Naive thymus-derived CD4-positive, alpha-beta T cell (primary cell): ENCODE measurements at regions of chr15 and their contacts with region 1.

Region 1: DNA sequence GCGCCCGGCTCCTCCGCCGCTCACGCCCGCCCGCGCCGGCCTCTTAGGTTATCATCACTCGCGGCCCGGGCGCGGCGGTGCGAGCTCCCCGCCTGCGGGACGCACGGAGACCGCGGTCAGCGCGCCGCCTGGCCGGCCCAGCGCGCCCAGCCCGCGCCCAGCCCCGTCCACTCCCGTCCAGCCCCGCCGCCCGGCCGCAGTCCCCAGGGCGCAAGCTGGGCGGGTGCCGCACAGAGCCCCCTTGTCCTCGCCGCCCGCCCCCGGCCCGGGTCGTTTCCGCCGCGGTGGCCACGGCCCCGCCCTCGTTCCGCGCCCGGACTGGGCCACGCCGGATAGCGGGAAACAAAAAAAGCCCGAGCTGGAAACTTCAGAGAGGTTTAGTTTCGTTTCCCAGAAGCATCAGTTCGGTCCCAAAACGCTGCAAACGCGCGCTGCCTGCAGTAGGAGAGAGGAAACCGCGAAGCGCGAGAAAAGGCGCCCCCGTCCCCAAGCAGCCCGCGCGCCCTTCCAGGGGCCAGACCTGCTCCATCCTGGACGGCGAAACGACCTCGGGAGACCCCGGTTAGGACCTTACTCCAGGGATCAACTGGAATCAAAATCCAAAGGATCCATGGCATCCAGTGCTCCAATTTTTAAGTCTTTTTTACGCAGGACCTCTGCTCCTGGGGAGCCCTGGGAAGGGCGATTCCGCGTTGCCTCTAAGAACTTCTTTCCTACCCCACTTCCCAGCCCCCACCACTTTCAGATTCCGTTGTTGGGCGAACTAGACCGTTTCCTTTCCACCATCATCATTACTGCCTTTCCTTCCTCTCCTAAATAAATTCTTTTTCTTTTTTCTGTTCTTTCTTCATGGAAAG is at the start of gene ATP10A:
- DNase-seq: peak in 8 of 9 donors; percentile 26 to 80 (median 44)
- ATAC-seq: no peak
- H3K4me3 ChIP-seq: peak within 1 kb of the TSS; percentile 88
- H3K4me3 Mint-ChIP-seq: peak within 1 kb of the TSS; percentile 88 to 98 (median 96)
- H3K27ac ChIP-seq: peak within 1 kb of the TSS; percentile 86
- H3K27ac Mint-ChIP-seq: peak within 1 kb of the TSS; percentile 89 to 100 (median 97)
- H3K4me1 ChIP-seq: peaks cover 15 to 18% of the 10 kb centered on the region in 2 donors
- H3K4me1 Mint-ChIP-seq: peaks cover 20 to 50% (median 40%) of the 10 kb centered on the region in 7 donors
- H3K27me3 ChIP-seq: no peaks in the 10 kb centered on the region
- H3K27me3 Mint-ChIP-seq: peaks cover 0 to 8% (median 0%) of the 10 kb centered on the region in 5 donors
- total RNA-seq, gene ATP10A: 56.7 to 86.4 (median 71.2) TPM

Region 2: DNA sequence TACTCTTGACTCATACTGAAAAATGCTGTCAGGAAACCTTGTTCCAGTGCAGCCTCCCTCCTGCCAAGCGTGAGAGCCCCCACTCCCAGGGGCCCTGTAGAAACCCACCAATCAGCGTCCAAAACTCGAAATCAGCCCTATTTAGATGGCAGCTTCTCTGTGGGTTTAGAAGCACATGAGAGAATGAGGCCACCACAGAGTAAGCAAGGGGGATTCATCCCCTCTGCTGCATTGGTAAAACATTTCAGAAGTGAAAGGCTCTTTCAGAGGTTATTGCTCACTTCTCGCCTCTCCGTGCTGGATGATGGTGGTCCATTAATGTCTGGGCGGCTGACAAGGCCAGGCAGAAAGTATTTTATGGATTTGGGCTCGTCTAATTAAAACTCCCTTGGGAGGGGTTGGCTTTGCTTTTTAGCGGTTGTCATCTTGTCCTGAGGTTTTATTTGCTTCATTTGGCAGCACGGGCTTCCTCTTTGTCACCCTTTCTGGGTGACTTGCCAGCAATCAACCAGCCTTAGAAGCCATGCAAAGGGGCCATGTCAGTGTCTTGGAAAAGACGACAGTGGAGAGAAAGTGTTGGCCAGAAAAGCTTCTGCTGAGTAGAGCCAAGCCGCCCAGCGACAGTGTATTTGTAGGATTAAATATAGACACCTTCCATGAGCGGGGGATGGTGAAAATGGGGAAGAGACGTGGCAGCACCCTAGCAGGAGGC is 145.7 kb before region 1 on chr15:
- CTCF ChIA-PET with region 1: no interaction called
- POLR2A ChIA-PET with region 1: no interaction called
- intact Hi-C with region 1: no loop called
- DNase-seq: no peak
- ATAC-seq: no peak
- H3K4me3 ChIP-seq: no peak overlapping the region
- H3K4me3 Mint-ChIP-seq: no peak overlapping the region
- H3K27ac ChIP-seq: no peak overlapping the region
- H3K27ac Mint-ChIP-seq: peak overlapping the region in 4 of 9 donors; percentile 23 to 65 (median 48)
- H3K4me1 ChIP-seq: no peaks in the 10 kb centered on the region
- H3K4me1 Mint-ChIP-seq: no peaks in the 10 kb centered on the region
- H3K27me3 ChIP-seq: no peaks in the 10 kb centered on the region
- H3K27me3 Mint-ChIP-seq: no peaks in the 10 kb centered on the region

Region 3: DNA sequence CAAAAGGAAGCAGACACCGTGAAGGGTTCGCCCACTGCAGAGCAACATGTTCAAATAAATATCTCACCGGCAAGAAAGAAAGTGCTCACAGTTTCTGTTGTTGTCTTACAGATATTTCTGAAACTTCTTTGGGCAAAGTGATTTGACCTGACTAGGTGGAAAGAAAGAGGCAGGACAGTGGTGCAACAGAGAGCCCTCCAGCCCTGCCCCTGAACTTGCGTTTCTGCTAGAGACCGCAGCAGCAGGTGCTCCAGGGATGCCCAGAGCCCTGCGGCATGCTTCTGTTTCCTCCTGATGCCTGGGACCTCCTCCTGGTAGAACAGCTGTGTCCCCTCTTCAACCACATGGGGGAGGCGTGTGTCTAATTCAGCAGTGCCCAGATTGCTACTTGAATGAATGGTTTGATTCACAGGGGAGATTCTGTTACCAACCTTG is 123.6 kb before region 1 on chr15:
- CTCF ChIA-PET with region 1: interaction called, 3 read pairs
- POLR2A ChIA-PET with region 1: interaction called, 4 read pairs
- intact Hi-C with region 1: loop called in 1 of 2 experiments (anchors 1 kb)
- DNase-seq: peak in 7 of 9 donors; percentile 42 to 60 (median 56)
- ATAC-seq: peak; percentile 82
- H3K4me3 ChIP-seq: no peak overlapping the region
- H3K4me3 Mint-ChIP-seq: peak overlapping the region in 1 of 10 donors; percentile 2
- H3K27ac ChIP-seq: no peak overlapping the region
- H3K27ac Mint-ChIP-seq: peak overlapping the region in 8 of 9 donors; percentile 1 to 69 (median 18)
- H3K4me1 ChIP-seq: no peaks in the 10 kb centered on the region
- H3K4me1 Mint-ChIP-seq: peaks cover 19 to 52% (median 42%) of the 10 kb centered on the region in 7 donors
- H3K27me3 ChIP-seq: no peaks in the 10 kb centered on the region
- H3K27me3 Mint-ChIP-seq: no peaks in the 10 kb centered on the region

Region 4: DNA sequence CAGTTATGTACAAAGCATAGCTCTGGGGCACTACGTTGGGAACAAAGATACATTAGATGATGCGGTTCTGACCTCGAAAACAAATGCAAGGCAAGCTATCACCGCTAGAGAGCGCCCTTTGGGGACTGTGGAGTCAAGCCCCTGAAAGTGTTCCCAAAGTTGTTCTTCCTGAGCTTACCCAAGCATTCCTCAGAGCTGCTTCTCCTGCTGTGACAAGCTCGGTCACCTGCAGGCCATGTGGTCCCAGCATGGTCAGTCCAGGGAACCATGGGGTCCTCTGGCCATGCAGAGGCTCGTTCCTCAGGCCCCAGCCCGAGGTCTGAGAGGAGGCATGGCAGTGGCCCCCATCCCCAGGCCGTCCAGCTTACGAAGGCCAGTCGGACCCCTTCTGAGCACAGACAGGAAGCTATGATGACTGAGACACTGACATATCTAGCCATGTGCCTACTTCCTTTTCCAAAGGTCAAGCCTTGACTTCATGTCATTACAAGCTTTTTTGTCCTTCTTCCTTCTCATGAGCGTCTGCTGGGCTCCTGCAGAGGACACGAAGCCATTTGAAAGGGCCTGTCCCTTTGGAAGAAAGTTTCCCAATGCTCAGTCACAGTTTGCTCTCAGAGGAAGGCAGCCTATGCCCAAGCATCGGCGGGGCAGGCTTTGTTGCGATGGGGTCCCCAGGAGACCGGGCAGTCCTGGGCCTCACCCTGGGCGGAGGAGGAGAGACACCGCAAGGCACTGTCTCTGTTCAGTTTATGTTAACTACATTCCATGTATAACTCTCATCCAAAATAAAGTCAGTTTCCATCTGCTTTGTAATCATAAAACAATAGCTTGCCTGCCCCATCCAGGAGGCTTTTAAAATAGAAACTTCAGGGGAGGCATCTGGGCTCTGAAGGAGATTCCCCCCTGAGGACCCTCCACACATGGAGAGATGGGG is 79.5 kb before region 1 on chr15:
- CTCF ChIA-PET with region 1: interaction called, 17 read pairs
- POLR2A ChIA-PET with region 1: interaction called, 3 read pairs
- intact Hi-C with region 1: loop called (anchors 1 to 2 kb)
- DNase-seq: peak in 6 of 9 donors; percentile 22 to 50 (median 40)
- ATAC-seq: peak; percentile 52
- H3K4me3 ChIP-seq: no peak overlapping the region
- H3K4me3 Mint-ChIP-seq: peak overlapping the region in 1 of 10 donors; percentile 16
- H3K27ac ChIP-seq: no peak overlapping the region
- H3K27ac Mint-ChIP-seq: peak overlapping the region; percentile 1 to 88 (median 62)
- H3K4me1 ChIP-seq: peaks cover 0 to 5% of the 10 kb centered on the region in 2 donors
- H3K4me1 Mint-ChIP-seq: peaks cover 37 to 62% (median 45%) of the 10 kb centered on the region in 7 donors
- H3K27me3 ChIP-seq: no peaks in the 10 kb centered on the region
- H3K27me3 Mint-ChIP-seq: no peaks in the 10 kb centered on the region

Region 5: DNA sequence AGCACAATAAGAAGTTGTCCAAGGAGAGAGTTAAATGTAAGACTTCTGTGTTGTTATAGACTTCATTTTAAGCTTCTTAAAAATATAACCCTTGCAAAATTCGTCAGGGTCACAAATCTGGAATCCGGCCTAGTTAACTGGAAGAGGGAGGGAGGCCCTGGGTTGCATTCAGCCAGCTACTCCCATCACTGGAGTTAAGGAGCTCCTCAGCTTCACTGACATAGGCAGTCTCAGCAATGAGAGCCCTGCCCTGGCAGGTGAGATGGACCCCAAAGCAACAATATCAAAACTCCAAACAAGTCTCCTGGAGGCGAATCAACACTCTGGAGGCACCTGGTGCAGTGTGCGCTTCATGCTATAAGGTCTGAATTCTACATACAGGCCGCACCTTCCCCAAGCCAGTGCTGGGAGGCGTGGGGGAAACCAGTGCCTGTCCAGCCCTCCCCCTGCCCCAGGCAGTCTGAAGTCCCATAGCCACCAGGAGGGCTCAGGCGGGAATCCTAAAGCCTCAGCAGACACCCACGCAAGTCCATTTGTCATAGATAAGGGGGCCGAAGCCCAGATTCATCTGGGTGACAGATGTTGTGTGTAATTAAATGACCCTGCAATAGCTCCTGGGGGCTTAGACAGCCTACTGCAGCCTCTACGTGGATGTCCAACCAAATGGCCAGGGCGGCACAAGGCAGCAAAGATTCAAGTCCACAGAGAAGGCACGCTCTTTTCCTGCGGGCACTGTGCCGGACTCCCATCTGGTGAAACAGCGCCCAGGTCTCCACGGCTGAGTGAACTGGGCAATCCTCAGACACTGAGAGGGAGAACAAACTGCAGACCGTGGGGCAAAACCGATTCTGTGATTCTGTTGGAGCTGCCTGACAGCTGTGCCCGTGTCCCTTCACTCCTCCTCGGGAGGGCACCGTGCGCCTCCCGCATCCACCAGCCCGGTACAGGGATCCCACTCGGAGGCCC is 65.1 kb before region 1 on chr15:
- CTCF ChIA-PET with region 1: no interaction called
- POLR2A ChIA-PET with region 1: interaction called, 11 read pairs
- intact Hi-C with region 1: no loop called
- DNase-seq: no peak
- ATAC-seq: no peak
- H3K4me3 ChIP-seq: no peak overlapping the region
- H3K4me3 Mint-ChIP-seq: peak overlapping the region in 5 of 10 donors; percentile 21 to 89 (median 80)
- H3K27ac ChIP-seq: no peak overlapping the region
- H3K27ac Mint-ChIP-seq: peak overlapping the region in 8 of 9 donors; percentile 8 to 87 (median 65)
- H3K4me1 ChIP-seq: peaks cover 0 to 31% of the 10 kb centered on the region in 2 donors
- H3K4me1 Mint-ChIP-seq: peaks cover 57 to 96% (median 84%) of the 10 kb centered on the region in 7 donors
- H3K27me3 ChIP-seq: no peaks in the 10 kb centered on the region
- H3K27me3 Mint-ChIP-seq: no peaks in the 10 kb centered on the region

Region 6: GRCh38 chr15:25850154-25851111 is 12.9 kb before region 1 on chr15:
- CTCF ChIA-PET with region 1: interaction called, 21 read pairs
- POLR2A ChIA-PET with region 1: interaction called, 257 read pairs
- intact Hi-C with region 1: loop called (anchors 1 kb)
- DNase-seq: peak; percentile 42 to 78 (median 73)
- ATAC-seq: peak; percentile 79
- H3K4me3 ChIP-seq: peak overlapping the region; percentile 65
- H3K4me3 Mint-ChIP-seq: peak overlapping the region; percentile 84 to 98 (median 94)
- H3K27ac ChIP-seq: peak overlapping the region; percentile 73
- H3K27ac Mint-ChIP-seq: peak overlapping the region; percentile 89 to 100 (median 98)
- H3K4me1 ChIP-seq: peaks cover 28 to 73% of the 10 kb centered on the region in 2 donors
- H3K4me1 Mint-ChIP-seq: peaks cover 64 to 100% (median 92%) of the 10 kb centered on the region in 7 donors
- H3K27me3 ChIP-seq: no peaks in the 10 kb centered on the region
- H3K27me3 Mint-ChIP-seq: no peaks in the 10 kb centered on the region

Region 7: GRCh38 chr15:26082221-26083109 is 219.1 kb after region 1 on chr15:
- CTCF ChIA-PET with region 1: no interaction called
- POLR2A ChIA-PET with region 1: interaction called, 3 read pairs
- intact Hi-C with region 1: loop called (anchors 2 kb)
- DNase-seq: peak; percentile 90 to 97 (median 96)
- ATAC-seq: peak; percentile 97
- H3K4me3 ChIP-seq: peak overlapping the region; percentile 83
- H3K4me3 Mint-ChIP-seq: peak overlapping the region; percentile 84 to 97 (median 92)
- H3K27ac ChIP-seq: peak overlapping the region; percentile 78
- H3K27ac Mint-ChIP-seq: peak overlapping the region; percentile 86 to 100 (median 98)
- H3K4me1 ChIP-seq: peaks cover 0 to 3% of the 10 kb centered on the region in 2 donors
- H3K4me1 Mint-ChIP-seq: peaks cover 13 to 58% (median 43%) of the 10 kb centered on the region in 7 donors
- H3K27me3 ChIP-seq: no peaks in the 10 kb centered on the region
- H3K27me3 Mint-ChIP-seq: peaks cover 0 to 18% (median 0%) of the 10 kb centered on the region in 5 donors